Activated T-helper 1 cell treated with anti-CD3 and anti-CD28 coated beads, Interleukin-12 subunit alpha, Interleukin-12 subunit beta, Interleukin-2, Interleukin-4 antibody, amounts not matched to agents 30 ng/mL and 10 ng/mL and 1 ng/mL, durations not matched to agents 14 hours and 24 hours and 36 hours (primary cell): ENCODE measurements at regions of chr1 and their contacts with region 1.

Region 1: GRCh38 chr1:198465201-198466144 is 75.0 kb downstream of the ATP6V1G3 start:
- DNase-seq: no peak
- H3K4me3 Mint-ChIP-seq: no peak overlapping the region
- H3K27ac Mint-ChIP-seq: no peak overlapping the region
- H3K4me1 Mint-ChIP-seq: peaks cover 13% of the 10 kb centered on the region
- H3K27me3 Mint-ChIP-seq: no peaks in the 10 kb centered on the region

Region 2: DNA sequence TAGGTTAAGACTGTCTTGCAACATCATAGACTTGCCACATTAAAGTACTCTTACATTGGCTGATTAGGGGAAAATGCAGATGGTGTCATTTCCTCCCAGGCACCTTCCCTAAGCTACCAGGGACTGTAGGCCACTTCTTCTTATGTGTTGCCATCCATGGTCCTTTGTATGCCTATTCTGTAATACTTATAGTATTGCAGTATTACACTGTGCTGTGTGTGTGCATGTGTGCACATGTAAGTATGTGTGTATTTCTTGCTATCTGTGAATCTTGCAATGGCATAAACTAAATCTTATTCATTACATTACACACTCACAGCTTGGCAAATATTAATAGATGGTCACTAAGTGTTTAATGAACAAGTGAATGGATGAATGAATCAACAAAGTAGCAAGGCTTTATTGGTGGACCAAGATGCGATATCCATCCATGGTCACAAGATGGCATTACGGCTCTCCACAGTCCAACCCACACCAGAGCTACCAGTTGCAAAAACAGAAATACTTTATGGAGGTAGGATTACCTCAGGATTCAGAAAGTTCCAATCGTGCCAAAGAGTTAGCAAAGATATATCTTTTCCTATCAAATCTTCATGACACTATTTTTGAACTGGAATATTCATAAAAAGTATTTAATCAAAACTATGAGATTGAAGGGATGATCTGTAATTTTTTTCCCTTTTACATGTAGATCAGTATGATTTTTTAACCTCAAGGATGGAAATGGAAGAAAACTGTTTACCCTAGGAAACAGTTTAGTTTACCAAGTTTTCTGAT is 850.4 kb before region 1 on chr1:
- intact Hi-C with region 1: loop called (anchors 2 kb)
- DNase-seq: no peak
- H3K4me3 Mint-ChIP-seq: no peak overlapping the region
- H3K27ac Mint-ChIP-seq: no peak overlapping the region
- H3K4me1 Mint-ChIP-seq: no peaks in the 10 kb centered on the region
- H3K27me3 Mint-ChIP-seq: no peaks in the 10 kb centered on the region

Region 3: GRCh38 chr1:198088360-198089071 is 377.0 kb before region 1 on chr1:
- intact Hi-C with region 1: loop called (anchors 1 kb)
- DNase-seq: no peak
- H3K4me3 Mint-ChIP-seq: no peak overlapping the region
- H3K27ac Mint-ChIP-seq: no peak overlapping the region
- H3K4me1 Mint-ChIP-seq: peaks cover 8% of the 10 kb centered on the region
- H3K27me3 Mint-ChIP-seq: peaks cover 5% of the 10 kb centered on the region

Region 4: DNA sequence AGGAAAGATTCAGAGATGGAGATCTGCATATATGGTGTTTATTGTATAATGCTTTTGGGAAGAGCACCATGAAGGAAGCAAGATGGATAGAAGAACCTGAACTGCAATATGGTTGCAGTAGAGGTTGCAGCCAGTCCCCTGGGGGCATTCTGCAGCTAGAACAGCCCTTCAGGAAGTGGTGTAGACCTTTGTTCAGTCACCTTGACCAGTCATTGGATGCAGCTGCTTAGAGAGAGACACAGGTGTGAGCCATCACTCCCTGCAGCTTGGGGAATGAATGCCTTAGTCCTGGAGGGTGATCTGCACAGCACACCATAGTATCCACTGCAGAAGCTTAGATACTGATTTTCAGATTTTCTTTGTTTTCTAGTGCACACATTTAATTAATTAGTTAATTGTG is 266.4 kb before region 1 on chr1:
- intact Hi-C with region 1: no loop called
- DNase-seq: no peak
- H3K4me3 Mint-ChIP-seq: no peak overlapping the region
- H3K27ac Mint-ChIP-seq: no peak overlapping the region
- H3K4me1 Mint-ChIP-seq: peaks cover 64% of the 10 kb centered on the region
- H3K27me3 Mint-ChIP-seq: no peaks in the 10 kb centered on the region

Region 5: DNA sequence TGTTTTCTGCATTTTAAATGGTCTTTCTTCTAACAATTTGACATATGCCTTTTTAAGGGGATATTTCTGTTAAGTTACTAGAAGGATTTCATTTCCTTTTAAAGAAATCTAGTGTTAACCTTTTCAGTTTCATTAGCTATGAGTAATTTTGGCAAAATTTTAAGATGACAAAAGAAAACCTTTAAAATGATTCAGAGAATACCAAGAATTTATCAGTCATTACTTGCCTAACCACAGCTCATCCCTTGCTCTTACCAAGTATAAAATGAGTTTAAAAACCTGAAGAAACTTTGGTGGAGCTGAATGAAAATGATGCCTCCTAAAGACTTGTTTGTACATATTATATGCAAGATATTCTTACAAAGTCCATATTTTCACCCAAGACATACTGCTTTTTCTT is 207.0 kb before region 1 on chr1:
- intact Hi-C with region 1: loop called (anchors 1 kb)
- DNase-seq: no peak
- H3K4me3 Mint-ChIP-seq: peak overlapping the region; percentile 11
- H3K27ac Mint-ChIP-seq: peak overlapping the region; percentile 78
- H3K4me1 Mint-ChIP-seq: peaks cover 50% of the 10 kb centered on the region
- H3K27me3 Mint-ChIP-seq: no peaks in the 10 kb centered on the region

Region 6: GRCh38 chr1:199322278-199322677 is 856.8 kb after region 1 on chr1:
- intact Hi-C with region 1: no loop called
- DNase-seq: no peak
- H3K4me3 Mint-ChIP-seq: no peak overlapping the region
- H3K27ac Mint-ChIP-seq: no peak overlapping the region
- H3K4me1 Mint-ChIP-seq: no peaks in the 10 kb centered on the region
- H3K27me3 Mint-ChIP-seq: peaks cover 20% of the 10 kb centered on the region